AG04449 (cell line): ENCODE measurements at regions of chr17 and their contacts with region 1.

Region 1: GRCh38 chr17:48678141-48678971 is 44.0 kb downstream of the PRAC1 start:
- DNase-seq: no peak
- H3K4me3 ChIP-seq: peak overlapping the region; percentile 30
- CTCF ChIP-seq: peak; percentile 93

Region 2: DNA sequence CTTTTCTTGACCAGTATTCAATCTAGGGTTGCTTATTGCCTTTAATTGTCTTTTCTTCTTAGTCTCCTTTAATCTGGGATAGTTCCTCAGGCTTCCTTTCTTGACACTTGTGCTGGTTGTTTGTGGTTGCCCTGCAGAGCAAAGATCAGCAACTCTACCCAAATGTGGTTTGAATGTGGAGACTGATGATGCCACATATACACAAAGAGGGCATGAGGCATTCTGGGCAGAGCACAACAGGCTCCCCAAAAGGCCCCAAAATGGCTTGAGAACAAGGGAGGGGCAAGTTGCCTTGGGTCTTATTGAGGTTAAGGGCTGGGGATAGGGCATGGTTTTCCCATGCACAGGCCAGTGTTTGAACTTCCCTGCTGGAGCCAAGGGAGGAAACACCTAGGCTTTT is 22.4 kb before region 1 on chr17:
- CTCF ChIA-PET with region 1: interaction called, 13 read pairs
- POLR2A ChIA-PET with region 1: no interaction called
- DNase-seq: no peak
- H3K4me3 ChIP-seq: no peak overlapping the region
- CTCF ChIP-seq: no peak

Region 3: GRCh38 chr17:48718761-48719641 is 40.6 kb after region 1 on chr17:
- CTCF ChIA-PET with region 1: interaction called, 35 read pairs
- POLR2A ChIA-PET with region 1: no interaction called
- DNase-seq: no peak
- H3K4me3 ChIP-seq: peak overlapping the region; percentile 6; the same call in 1 of the 2 replicates
- CTCF ChIP-seq: no peak

Region 4: GRCh38 chr17:48738803-48739526 is 60.6 kb after region 1 on chr17:
- CTCF ChIA-PET with region 1: interaction called, 11 read pairs
- POLR2A ChIA-PET with region 1: no interaction called
- DNase-seq: no peak
- H3K4me3 ChIP-seq: no peak overlapping the region
- CTCF ChIP-seq: no peak

Region 5: GRCh38 chr17:48804925-48805411 is 126.6 kb after region 1 on chr17:
- CTCF ChIA-PET with region 1: interaction called, 33 read pairs
- POLR2A ChIA-PET with region 1: no interaction called
- DNase-seq: no peak
- H3K4me3 ChIP-seq: no peak overlapping the region
- CTCF ChIP-seq: peak; percentile 91

Region 6: GRCh38 chr17:48908047-48908843 is 229.9 kb after region 1 on chr17 and contains the start of gene UBE2Z:
- CTCF ChIA-PET with region 1: no interaction called
- POLR2A ChIA-PET with region 1: no interaction called
- DNase-seq: peak; percentile 71
- H3K4me3 ChIP-seq: peak within 1 kb of the TSS; percentile 74
- CTCF ChIP-seq: peak; percentile 15